ENCODE measurements at regions of chr6 and their contacts with region 1.

Region 1: GRCh38 chr6:159104163-159104925 is 59.6 kb upstream of the TAGAP start:
- DNase-seq: peak; percentile 30 to 76
- ATAC-seq: peak; percentile 94 to 97
- H3K4me3 ChIP-seq: no peak overlapping the region
- H3K27ac ChIP-seq: no peak overlapping the region
- H3K4me1 ChIP-seq: no peaks in the 10 kb centered on the region
- CTCF ChIP-seq: peak; percentile 71
- EP300 ChIP-seq: no peak
- POLR2A ChIP-seq: no peak
- RAD21 ChIP-seq: peak; percentile 71 to 74

Region 2: GRCh38 chr6:159008656-159009288 is 95.6 kb before region 1 on chr6:
- CTCF ChIA-PET with region 1: interaction called, 45 read pairs
- POLR2A ChIA-PET with region 1: no interaction called
- DNase-seq: peak; percentile 21 to 29
- ATAC-seq: peak in 1 of 2 experiments; percentile 60; a peak in 3 of 6 replicates
- H3K4me3 ChIP-seq: no peak overlapping the region
- H3K27ac ChIP-seq: no peak overlapping the region
- H3K4me1 ChIP-seq: no peaks in the 10 kb centered on the region
- CTCF ChIP-seq: peak; percentile 47
- EP300 ChIP-seq: no peak
- POLR2A ChIP-seq: no peak
- RAD21 ChIP-seq: peak; percentile 45 to 51

Region 3: DNA sequence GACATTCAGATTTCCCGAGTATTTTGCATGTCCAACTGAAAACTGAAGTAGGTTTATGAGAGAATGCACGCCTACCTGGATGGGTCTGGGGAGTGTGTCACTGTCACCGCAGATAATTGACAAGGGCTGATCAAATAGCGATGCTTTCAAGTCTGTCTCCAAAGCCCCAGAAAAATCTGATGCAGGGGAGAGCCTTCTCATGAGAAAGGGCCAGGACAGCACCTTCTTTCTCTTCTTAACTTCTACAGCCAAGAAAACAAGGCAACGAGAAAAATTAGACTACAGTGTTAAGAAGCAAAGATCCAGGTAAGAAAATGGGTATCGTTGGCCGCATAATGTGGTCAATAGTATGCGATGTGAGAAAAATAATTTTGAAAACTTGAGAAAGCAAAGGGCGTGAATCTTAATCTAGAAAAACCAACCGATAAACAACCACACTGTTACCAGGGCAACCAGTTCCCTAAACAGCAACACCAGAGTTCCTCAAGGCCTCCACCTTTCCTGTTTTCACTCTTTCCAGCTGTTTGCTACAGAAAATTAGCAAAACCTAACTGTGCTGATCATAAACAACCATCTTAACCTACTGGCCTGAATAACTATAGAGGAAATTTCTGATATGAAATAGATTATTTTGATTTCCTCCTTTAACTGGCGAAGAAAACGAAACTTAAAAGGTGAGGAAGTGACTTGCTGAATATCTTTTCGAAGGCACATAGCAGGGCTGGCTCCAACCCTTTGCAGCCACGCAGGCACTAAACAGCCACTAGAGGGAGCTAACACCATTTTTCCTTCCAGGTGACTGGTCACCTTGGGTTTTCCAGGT is 62.1 kb before region 1 on chr6:
- CTCF ChIA-PET with region 1: interaction called, 30 read pairs
- POLR2A ChIA-PET with region 1: no interaction called
- DNase-seq: peak; percentile 62 to 64
- ATAC-seq: peak; percentile 87 to 95
- H3K4me3 ChIP-seq: no peak overlapping the region
- H3K27ac ChIP-seq: no peak overlapping the region
- H3K4me1 ChIP-seq: no peaks in the 10 kb centered on the region
- CTCF ChIP-seq: peak; percentile 78
- EP300 ChIP-seq: no peak
- POLR2A ChIP-seq: no peak
- RAD21 ChIP-seq: peak; percentile 58 to 67

Region 4: DNA sequence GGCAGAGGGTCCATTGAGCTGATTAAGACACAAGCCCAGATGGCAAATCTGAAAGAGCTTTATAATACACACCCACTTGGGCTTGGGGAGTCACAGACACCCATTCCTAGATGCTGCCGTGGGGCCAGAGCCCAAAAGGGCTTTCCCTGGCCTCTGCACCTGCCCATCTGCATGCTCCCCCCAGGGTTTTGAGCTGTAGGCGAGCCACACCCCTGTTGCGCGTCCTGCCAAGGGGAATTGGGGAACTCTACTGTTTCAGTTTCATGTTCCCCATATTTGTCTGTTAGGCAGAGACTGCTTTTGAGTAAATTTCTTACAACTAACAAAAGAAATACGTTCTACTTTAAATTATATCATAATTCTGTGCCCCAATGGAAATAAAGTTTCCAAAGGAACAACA is 12.0 kb after region 1 on chr6:
- CTCF ChIA-PET with region 1: interaction called, 11 read pairs
- POLR2A ChIA-PET with region 1: no interaction called
- DNase-seq: no peak
- ATAC-seq: no peak
- H3K4me3 ChIP-seq: no peak overlapping the region
- H3K27ac ChIP-seq: no peak overlapping the region
- H3K4me1 ChIP-seq: no peaks in the 10 kb centered on the region
- CTCF ChIP-seq: no peak
- EP300 ChIP-seq: no peak
- POLR2A ChIP-seq: no peak
- RAD21 ChIP-seq: no peak

Measured in A549 (cell line).